ENCODE measurements at regions of chr15 and their contacts with region 1.

Region 1: DNA sequence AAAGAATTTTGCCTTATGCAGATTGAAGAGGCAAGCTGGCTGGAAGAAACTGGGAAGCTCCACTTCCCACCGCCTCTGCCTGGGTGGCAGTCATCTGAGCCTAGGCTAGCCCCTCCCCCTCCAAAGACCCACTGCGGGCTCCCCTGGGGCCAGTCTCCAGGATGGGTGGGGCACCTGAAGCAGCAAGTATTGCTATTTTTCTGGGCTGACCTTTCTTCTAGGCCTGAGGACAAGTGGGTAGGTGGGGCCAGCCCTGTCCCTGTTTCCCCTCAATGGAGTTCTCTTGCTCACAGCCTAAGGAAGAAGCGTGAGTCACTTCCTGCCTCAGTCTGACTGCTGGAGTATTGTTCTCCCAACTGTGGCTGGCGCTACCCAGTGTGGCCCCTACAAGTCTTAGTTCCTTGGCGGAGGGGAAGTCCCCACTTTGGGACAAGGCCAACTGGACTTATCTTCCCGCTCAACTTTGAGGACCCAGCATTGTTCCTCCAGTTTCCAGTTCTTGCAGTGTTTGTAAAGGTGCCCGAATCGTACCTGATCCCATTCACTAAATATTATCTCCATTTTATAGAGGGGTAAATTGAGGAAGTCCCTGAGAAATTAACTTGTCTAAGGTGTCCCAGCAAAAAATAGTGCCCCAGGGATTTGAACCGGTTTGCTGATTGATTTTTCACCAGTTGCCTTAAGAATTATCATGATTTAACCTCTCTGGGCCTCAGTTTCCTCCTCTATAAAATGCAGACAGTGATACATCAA is 1.4 kb downstream of the FURIN start:
- ATAC-seq: peak; percentile 21 to 69 (median 58)
- H3K4me3 ChIP-seq: no peak overlapping the region
- H3K27ac ChIP-seq: no peak overlapping the region
- H3K4me1 ChIP-seq: peaks cover 23 to 40% of the 10 kb centered on the region in 2 donors

Region 2: GRCh38 chr15:90266061-90266431 is 603.7 kb before region 1 on chr15:
- in situ Hi-C with region 1: no loop called
- ATAC-seq: peak; percentile 1 to 40 (median 9)
- H3K4me3 ChIP-seq: peak overlapping the region; percentile 81 to 99 (median 91)
- H3K27ac ChIP-seq: peak overlapping the region; percentile 98 to 99
- H3K4me1 ChIP-seq: peaks cover 24 to 40% of the 10 kb centered on the region in 2 donors

Region 3: DNA sequence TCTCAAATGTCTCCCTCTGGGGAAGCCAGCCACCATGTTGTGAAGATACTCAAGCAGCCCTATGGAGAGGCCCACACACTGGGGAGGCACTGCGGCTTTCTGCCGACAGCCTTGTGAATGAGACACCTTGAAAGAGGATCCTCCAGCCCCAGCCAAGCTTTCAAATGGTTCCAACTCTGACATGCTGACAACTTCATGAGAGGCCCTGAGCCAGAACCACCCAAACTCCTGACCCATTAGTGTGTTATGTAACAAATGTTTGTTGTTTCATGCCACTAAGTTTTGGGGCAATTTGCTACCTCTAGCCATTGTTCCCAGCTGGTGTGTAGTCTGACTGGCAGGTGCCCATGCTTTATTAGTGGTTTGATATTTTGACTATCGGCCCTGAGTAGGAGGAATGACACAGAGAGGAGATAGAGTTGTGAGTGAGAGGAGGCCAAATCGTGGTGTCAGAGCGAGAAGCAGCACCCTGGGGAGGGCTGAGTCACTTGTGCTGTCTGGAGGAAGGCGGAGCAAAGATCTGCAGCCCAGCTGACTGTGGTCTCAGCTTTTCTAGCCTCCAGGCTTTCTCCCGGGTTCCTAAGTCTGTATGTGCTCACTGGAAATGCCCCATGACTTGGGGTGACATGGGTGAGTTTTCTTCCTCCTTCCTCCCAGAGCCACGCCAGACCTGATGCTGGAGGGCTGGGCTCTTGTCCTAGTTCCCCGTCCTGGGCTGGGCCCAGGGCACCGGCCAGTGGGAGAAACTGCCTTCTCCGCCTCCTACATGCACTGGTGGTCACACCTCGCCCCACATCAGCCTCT is 209.4 kb before region 1 on chr15:
- in situ Hi-C with region 1: loop called in 1 of 9 experiments (anchors 25 kb)
- ATAC-seq: peak; percentile 63 to 92 (median 79)
- H3K4me3 ChIP-seq: no peak overlapping the region
- H3K27ac ChIP-seq: no peak overlapping the region
- H3K4me1 ChIP-seq: peaks cover 0 to 2% of the 10 kb centered on the region in 2 donors

Region 4: DNA sequence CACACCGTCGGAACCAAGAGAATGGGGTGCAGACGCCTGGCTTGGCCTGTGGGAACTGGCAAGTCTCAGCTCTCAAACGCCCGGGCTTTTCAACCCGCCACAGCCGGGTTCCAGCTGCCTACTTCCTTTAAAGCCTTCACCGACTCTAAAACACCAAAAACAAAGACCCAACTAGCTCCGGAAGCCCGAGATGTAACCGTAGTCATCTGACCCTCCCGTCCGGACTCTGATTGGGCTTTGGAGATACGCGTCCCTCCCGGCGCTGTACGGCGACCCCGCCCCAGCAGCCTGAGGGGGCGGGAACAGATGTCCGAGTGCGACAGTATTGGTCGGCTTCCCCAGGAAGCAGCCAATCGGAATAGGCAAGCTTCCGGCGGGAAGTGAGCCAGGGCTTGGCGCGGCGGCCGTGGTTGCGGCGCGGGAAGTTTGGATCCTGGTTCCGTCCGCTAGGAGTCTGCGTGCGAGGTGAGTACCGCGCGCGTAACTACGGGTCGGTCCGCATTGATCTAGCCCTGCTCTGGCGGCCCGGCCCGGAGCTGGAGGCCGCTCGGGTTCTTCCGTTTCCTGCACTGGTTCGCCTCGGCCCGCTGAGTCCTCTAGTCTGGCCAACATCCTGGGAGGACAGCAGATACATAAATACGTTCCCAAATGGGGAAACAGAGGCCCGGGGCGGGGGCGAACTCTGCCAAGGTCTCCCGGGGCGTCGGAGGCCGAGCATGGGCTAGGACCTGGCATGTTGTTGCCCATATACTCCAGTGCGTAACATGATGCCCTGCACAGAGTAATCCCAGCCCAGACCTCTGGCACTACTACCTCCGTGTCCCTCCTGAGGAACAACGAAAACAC is 152.6 kb before region 1 on chr15 and contains the start of gene BLM:
- in situ Hi-C with region 1: loop called in 1 of 9 experiments (anchors 10 kb)
- ATAC-seq: peak; percentile 99 to 100 (median 100)
- H3K4me3 ChIP-seq: peak within 1 kb of the TSS; percentile 44 to 92 (median 62)
- H3K27ac ChIP-seq: peak within 1 kb of the TSS; percentile 24 to 70
- H3K4me1 ChIP-seq: peaks cover 5 to 6% of the 10 kb centered on the region in 2 donors
- total RNA-seq, gene BLM: 1.2 to 15.8 (median 4.2) TPM